ENCODE measurements at regions of chr7 and their contacts with region 1.

Region 1: DNA sequence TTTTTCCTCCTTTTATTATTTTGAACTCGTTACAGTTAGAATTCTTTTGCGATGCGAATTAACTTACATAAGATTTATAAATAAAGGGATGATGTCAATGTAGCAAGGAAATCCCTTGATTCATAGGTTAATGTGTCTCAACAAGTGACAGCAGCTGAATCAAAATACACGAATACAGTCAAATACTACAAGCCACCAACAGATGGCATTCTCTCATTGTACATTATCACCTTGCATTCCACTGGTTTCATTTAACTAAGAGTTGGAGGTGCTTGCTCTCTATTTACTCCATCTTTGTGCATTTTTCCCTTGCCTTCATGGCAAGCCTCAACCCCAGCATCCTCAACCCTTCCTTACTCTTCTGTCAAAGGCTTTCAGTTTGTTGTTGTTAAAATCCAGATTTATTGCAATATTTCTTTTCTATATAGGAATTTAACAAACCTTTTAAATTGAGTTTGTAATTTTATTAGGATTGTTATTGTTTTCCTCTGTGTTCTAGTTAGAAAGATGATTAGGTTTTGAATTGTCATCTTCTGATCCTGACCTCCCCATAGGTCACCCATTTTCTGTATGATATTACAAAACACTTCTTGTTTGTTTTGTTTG is 78.3 kb downstream of the SLC25A40 start:
- DNase-seq: no peak
- H3K4me3 Mint-ChIP-seq: no peak overlapping the region
- H3K27ac Mint-ChIP-seq: no peak overlapping the region
- H3K4me1 Mint-ChIP-seq: no peaks in the 10 kb centered on the region
- H3K27me3 Mint-ChIP-seq: peaks cover 12% of the 10 kb centered on the region

Region 2: DNA sequence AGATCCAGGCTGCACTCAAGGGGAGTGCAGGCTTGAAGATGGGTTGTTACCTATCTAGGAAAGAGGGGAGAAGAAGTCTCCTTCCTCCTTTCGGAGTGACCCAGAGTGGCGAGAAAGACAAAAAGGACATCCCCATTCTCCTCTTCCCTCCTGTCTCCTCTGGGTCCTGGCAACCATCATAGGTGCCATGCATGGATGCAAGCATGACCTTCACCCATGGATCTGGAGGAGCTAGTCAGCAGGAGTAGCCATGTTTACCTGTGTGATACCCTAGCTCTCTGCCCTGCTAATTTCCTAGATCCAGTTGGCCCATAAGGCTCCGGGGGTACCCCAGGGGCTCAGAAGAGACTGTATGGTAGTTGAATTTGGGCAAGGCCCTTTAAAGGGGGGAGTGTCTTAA is 469.6 kb before region 1 on chr7:
- intact Hi-C with region 1: no loop called
- DNase-seq: no peak
- H3K4me3 Mint-ChIP-seq: no peak overlapping the region
- H3K27ac Mint-ChIP-seq: no peak overlapping the region
- H3K4me1 Mint-ChIP-seq: peaks cover 2% of the 10 kb centered on the region
- H3K27me3 Mint-ChIP-seq: no peaks in the 10 kb centered on the region

Region 3: DNA sequence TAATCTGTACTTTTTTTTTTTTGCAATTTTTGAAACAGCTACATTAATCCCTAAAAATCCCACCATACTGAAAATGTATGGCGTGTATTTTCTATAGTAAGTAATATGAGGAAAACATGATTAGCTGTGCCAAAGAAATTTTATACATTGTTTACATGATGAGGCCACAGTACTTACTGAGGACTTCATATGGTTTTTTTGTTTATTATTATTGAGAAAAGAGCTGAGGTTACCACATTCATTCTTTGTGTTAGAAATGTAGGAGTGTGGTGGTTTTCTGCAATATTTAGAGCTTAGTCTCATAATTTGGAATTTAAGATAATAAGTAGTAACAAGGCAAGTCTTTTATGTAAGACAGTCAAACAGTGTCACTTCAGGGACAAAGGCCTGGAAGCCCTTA is 33.2 kb after region 1 on chr7:
- intact Hi-C with region 1: no loop called
- DNase-seq: no peak
- H3K4me3 Mint-ChIP-seq: no peak overlapping the region
- H3K27ac Mint-ChIP-seq: no peak overlapping the region
- H3K4me1 Mint-ChIP-seq: no peaks in the 10 kb centered on the region
- H3K27me3 Mint-ChIP-seq: no peaks in the 10 kb centered on the region

Region 4: GRCh38 chr7:87876040-87876868 is 78.4 kb after region 1 on chr7 and contains the starts of genes DBF4 and SLC25A40:
- intact Hi-C with region 1: no loop called
- DNase-seq: peak; percentile 96
- H3K4me3 Mint-ChIP-seq: peak within 1 kb of the TSS; percentile 96
- H3K27ac Mint-ChIP-seq: peak within 1 kb of the TSS; percentile 97
- H3K4me1 Mint-ChIP-seq: peaks cover 49% of the 10 kb centered on the region
- H3K27me3 Mint-ChIP-seq: no peaks in the 10 kb centered on the region
- total RNA-seq, gene DBF4: 72.3 and 75.3 TPM in 2 replicates
- total RNA-seq, gene SLC25A40: 48.7 and 49.3 TPM in 2 replicates

Region 5: DNA sequence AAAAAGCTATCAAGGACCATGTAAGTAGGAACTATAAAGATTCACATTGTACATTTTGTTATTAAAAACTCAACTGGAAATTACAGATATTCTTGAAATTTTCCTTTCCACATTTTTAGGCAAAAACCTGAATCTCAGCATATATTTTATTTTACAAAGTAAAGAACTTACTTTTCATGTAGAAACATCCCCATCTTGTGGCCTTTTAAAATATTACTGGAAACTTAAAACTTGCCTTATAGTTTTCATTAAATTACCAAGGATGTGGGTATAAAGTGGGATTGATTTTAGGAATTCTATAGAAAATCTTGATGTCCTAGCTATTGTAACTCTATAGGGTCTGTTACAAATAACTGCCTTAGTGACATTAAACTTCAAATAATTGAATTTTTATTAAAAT is 89.0 kb after region 1 on chr7:
- intact Hi-C with region 1: loop called (anchors 1 kb)
- DNase-seq: no peak
- H3K4me3 Mint-ChIP-seq: no peak overlapping the region
- H3K27ac Mint-ChIP-seq: no peak overlapping the region
- H3K4me1 Mint-ChIP-seq: peaks cover 32% of the 10 kb centered on the region
- H3K27me3 Mint-ChIP-seq: no peaks in the 10 kb centered on the region

Region 6: DNA sequence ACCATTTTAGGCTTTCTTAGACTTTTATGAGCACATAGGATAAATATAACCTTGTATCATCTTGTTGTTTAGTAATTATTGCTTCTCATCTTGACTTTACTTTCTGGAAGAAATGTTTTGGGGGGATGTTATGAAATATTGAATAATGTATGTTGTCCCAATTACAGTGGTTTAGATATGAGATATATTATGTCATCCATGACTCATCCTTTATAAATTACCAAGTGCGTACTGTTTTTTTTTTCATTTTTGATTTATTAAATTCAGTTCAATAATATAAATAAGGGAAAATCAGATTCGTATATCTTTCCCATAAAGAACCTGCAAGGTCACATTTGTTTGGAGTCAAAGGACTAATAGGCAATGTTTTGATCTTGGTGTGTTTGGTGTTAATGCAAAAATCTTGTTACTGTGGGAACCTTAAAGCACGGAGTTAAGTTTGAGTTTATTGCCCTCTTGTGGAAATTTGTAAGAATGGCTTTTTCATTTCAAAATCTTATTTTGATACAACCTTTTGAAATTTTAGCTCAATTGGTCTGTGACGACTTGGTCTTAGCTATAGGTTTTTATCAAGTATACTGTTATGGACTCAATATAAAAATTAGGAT is 313.3 kb after region 1 on chr7:
- intact Hi-C with region 1: loop called (anchors 1 kb)
- DNase-seq: no peak
- H3K4me3 Mint-ChIP-seq: no peak overlapping the region
- H3K27ac Mint-ChIP-seq: no peak overlapping the region
- H3K4me1 Mint-ChIP-seq: peaks cover 8% of the 10 kb centered on the region
- H3K27me3 Mint-ChIP-seq: no peaks in the 10 kb centered on the region

Region 7: GRCh38 chr7:88169717-88170320 is 371.9 kb after region 1 on chr7:
- intact Hi-C with region 1: loop called (anchors 2 kb)
- DNase-seq: no peak
- H3K4me3 Mint-ChIP-seq: no peak overlapping the region
- H3K27ac Mint-ChIP-seq: no peak overlapping the region
- H3K4me1 Mint-ChIP-seq: peaks cover 3% of the 10 kb centered on the region
- H3K27me3 Mint-ChIP-seq: no peaks in the 10 kb centered on the region

Measured in activated T-helper 2 cell treated with anti-CD3 and anti-CD28 coated beads, Interferon-gamma antibody, Interleukin-2, Interleukin-4, amounts not matched to agents 10 μg/mL and 5 μg/mL and 100 μg/mL, durations not matched to agents 14 hours and 24 hours and 36 hours (primary cell).